ENCODE measurements at regions of chr2 and their contacts with region 1.

Region 1: DNA sequence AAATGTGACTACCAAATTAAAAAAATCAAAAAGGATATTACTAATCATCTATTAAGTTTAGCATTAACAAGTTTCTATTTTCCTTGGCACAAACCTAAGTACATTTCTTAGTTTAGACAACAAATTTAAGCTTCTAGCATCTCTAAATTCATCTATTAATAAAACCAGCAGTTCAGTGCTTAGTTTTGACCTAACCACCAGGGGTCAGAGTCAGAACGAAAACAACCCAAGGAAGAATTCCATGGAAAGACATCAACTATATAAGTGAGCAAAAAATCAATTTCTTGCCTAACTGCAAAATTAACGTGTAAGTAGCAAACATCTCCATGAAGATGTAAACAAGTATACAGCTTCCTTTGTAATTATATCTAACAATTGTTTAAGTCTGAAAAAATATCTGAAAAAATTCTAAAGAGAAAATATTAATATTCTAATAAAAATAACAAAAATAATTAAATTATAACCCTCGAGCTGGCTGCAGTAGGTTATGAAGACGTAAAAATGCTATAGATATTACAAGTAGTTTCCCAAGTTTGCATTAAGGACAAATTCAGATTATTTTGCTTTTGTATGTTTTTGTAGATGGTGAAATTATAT is 83.7 kb downstream of the CERKL start:
- DNase-seq: peak; percentile 26
- H3K4me3 ChIP-seq: no peak overlapping the region; a peak in 1 of 4 replicates
- H3K27ac ChIP-seq: no peak overlapping the region
- H3K4me1 ChIP-seq: peaks cover 0 to 3% of the 10 kb centered on the region in 2 experiments; a peak in 1 of 4 replicates
- H3K27me3 ChIP-seq: no peaks in the 10 kb centered on the region
- CTCF ChIP-seq: peak; percentile 73
- EP300 ChIP-seq: no peak
- RAD21 ChIP-seq: peak; percentile 86

Region 2: GRCh38 chr2:181586569-181587081 is 13.4 kb after region 1 on chr2:
- CTCF ChIA-PET with region 1: interaction called, 45 read pairs
- POLR2A ChIA-PET with region 1: no interaction called
- DNase-seq: no peak
- H3K4me3 ChIP-seq: no peak overlapping the region
- H3K27ac ChIP-seq: no peak overlapping the region
- H3K4me1 ChIP-seq: peaks cover 0 to 4% of the 10 kb centered on the region in 2 experiments; a peak in 2 of 4 replicates
- H3K27me3 ChIP-seq: no peaks in the 10 kb centered on the region
- CTCF ChIP-seq: no peak
- EP300 ChIP-seq: no peak
- RAD21 ChIP-seq: no peak

Region 3: GRCh38 chr2:181723731-181724130 is 150.5 kb after region 1 on chr2:
- CTCF ChIA-PET with region 1: interaction called, 213 read pairs
- POLR2A ChIA-PET with region 1: no interaction called
- DNase-seq: no peak
- H3K4me3 ChIP-seq: no peak overlapping the region
- H3K27ac ChIP-seq: no peak overlapping the region
- H3K4me1 ChIP-seq: no peaks in the 10 kb centered on the region
- H3K27me3 ChIP-seq: no peaks in the 10 kb centered on the region
- CTCF ChIP-seq: no peak
- EP300 ChIP-seq: no peak
- RAD21 ChIP-seq: no peak

Region 4: DNA sequence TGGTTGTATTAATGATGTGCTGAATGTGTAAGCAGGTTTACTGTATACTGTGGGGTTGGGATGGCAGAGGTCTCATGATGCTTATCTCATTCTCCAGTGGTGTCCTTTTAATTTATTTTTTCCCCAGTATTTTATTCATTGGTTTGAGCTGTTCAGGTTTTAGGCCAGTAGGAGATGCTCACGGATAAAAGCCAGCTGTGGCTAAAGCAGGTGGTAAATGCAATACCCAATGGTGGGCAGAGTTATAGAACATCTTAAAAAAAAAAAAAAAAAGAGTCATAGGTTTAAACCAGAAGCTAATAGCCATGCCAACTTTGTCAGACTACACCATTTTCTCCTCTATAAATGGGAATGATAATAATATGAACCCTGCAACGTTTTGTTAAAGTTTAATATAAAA is 164.8 kb after region 1 on chr2:
- CTCF ChIA-PET with region 1: interaction called, 10 read pairs
- POLR2A ChIA-PET with region 1: no interaction called
- DNase-seq: no peak
- H3K4me3 ChIP-seq: no peak overlapping the region
- H3K27ac ChIP-seq: no peak overlapping the region
- H3K4me1 ChIP-seq: peaks cover 2 to 8% of the 10 kb centered on the region in 2 experiments; a peak in 2 of 4 replicates
- H3K27me3 ChIP-seq: no peaks in the 10 kb centered on the region
- CTCF ChIP-seq: peak; percentile 43
- EP300 ChIP-seq: no peak
- RAD21 ChIP-seq: peak; percentile 51